ENCODE measurements at regions of chr6 and their contacts with region 1.

Region 1: GRCh38 chr6:51273228-51273940 is 454.7 kb downstream of the TFAP2B start:
- H3K4me3 Mint-ChIP-seq: no peak overlapping the region
- H3K27ac Mint-ChIP-seq: peak overlapping the region; percentile 26
- H3K4me1 Mint-ChIP-seq: peaks cover 67% of the 10 kb centered on the region
- H3K27me3 Mint-ChIP-seq: peaks cover 3% of the 10 kb centered on the region

Region 2: DNA sequence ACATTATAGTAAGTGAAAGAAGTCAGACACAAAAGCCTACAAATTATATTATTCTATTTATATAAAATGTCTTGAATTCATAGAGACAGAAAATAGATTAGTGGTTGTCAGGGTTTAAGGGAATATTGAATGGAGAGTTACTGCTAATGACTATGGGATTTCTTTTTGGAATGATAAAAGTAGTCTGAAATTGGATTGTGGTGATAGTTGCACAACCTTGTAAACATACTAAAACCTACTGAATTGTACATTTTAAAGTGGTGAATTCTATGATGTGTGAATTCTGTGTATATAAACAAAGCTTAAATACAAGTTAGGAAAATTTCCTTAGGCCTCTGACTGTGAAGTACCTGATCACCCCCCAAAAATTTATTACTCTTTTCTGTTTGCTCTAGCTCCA is 111.6 kb before region 1 on chr6:
- intact Hi-C with region 1: no loop called
- H3K4me3 Mint-ChIP-seq: no peak overlapping the region
- H3K27ac Mint-ChIP-seq: no peak overlapping the region
- H3K4me1 Mint-ChIP-seq: no peaks in the 10 kb centered on the region
- H3K27me3 Mint-ChIP-seq: no peaks in the 10 kb centered on the region

Region 3: DNA sequence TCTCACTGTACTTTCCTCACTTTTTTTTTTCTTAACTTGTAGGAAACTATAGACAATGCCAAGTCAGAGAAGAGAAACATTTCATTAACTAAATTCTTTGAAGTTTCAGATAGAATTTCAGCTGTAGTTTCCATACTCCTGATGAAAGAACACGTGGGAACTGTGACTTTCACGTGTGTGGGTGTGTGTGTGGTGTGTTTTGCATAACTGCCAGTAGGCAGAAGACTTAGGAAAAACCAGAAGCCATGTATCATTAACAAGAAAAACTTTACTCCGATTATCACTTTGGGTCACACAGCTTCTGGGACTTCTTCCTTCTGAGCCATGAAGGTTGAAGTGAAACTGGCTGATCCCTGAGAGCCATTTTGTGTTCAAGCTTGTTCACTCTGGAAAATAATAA is 28.6 kb after region 1 on chr6:
- intact Hi-C with region 1: loop called (anchors 5 kb)
- H3K4me3 Mint-ChIP-seq: no peak overlapping the region
- H3K27ac Mint-ChIP-seq: no peak overlapping the region
- H3K4me1 Mint-ChIP-seq: peaks cover 30% of the 10 kb centered on the region
- H3K27me3 Mint-ChIP-seq: no peaks in the 10 kb centered on the region